ENCODE measurements at regions of chr1 and their contacts with region 1.

Region 1: GRCh38 chr1:177256153-177257075 is 85.7 kb downstream of the BRINP2 start:
- DNase-seq: peak; percentile 83
- ATAC-seq: peak; percentile 99
- H3K4me3 Mint-ChIP-seq: no peak overlapping the region
- H3K27ac Mint-ChIP-seq: no peak overlapping the region
- H3K4me1 Mint-ChIP-seq: peaks cover 7% of the 10 kb centered on the region
- H3K27me3 Mint-ChIP-seq: no peaks in the 10 kb centered on the region; the same call in 1 of the 2 replicates
- CTCF ChIP-seq: peak; percentile 60

Region 2: DNA sequence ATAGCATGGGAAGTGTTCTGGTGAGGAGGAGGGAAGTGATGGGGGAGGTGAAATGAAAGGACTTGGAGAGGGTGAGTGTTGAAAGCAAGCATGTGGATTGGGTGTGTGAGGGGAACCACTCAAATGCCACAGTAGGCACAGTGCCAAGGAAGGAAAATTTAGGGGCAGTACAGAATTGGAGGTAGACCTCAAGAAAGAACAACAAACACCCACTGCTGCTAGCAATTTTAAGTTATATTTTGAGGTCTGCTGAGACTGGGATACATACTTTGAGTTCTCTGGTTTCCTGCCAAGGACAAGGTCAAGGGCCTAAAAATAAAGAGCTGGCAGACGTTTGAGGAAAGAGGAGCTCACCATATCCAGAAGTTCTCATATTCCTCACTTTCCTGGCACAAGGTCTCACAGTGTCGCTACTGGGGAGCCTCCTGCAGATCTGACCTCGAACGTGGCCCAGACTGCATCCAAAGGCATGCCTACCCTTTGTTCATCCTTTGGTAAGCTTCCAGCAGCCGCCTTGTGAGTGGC is 18.3 kb after region 1 on chr1:
- CTCF ChIA-PET with region 1: interaction called, 22 read pairs
- POLR2A ChIA-PET with region 1: no interaction called
- DNase-seq: no peak
- ATAC-seq: no peak
- H3K4me3 Mint-ChIP-seq: no peak overlapping the region
- H3K27ac Mint-ChIP-seq: no peak overlapping the region
- H3K4me1 Mint-ChIP-seq: peaks cover 3% of the 10 kb centered on the region
- H3K27me3 Mint-ChIP-seq: peaks cover 15% of the 10 kb centered on the region
- CTCF ChIP-seq: no peak

Region 3: GRCh38 chr1:177340601-177341067 is 84.2 kb after region 1 on chr1:
- CTCF ChIA-PET with region 1: no interaction called
- POLR2A ChIA-PET with region 1: no interaction called
- DNase-seq: no peak
- ATAC-seq: no peak
- H3K4me3 Mint-ChIP-seq: no peak overlapping the region
- H3K27ac Mint-ChIP-seq: no peak overlapping the region
- H3K4me1 Mint-ChIP-seq: peaks cover 4% of the 10 kb centered on the region; the same call in 1 of the 2 replicates
- H3K27me3 Mint-ChIP-seq: no peaks in the 10 kb centered on the region
- CTCF ChIP-seq: no peak

Region 4: GRCh38 chr1:177355595-177355994 is 99.2 kb after region 1 on chr1:
- CTCF ChIA-PET with region 1: interaction called, 51 read pairs
- POLR2A ChIA-PET with region 1: no interaction called
- DNase-seq: peak; percentile 33
- ATAC-seq: peak; percentile 78
- H3K4me3 Mint-ChIP-seq: no peak overlapping the region
- H3K27ac Mint-ChIP-seq: no peak overlapping the region
- H3K4me1 Mint-ChIP-seq: peaks cover 2% of the 10 kb centered on the region
- H3K27me3 Mint-ChIP-seq: no peaks in the 10 kb centered on the region
- CTCF ChIP-seq: peak; percentile 39; the same call in 1 of the 2 replicates

Region 5: GRCh38 chr1:177913762-177914540 is 657.5 kb after region 1 on chr1:
- CTCF ChIA-PET with region 1: interaction called, 13 read pairs
- POLR2A ChIA-PET with region 1: no interaction called
- DNase-seq: peak; percentile 62
- ATAC-seq: peak; percentile 91
- H3K4me3 Mint-ChIP-seq: no peak overlapping the region
- H3K27ac Mint-ChIP-seq: no peak overlapping the region
- H3K4me1 Mint-ChIP-seq: no peaks in the 10 kb centered on the region; the same call in 1 of the 2 replicates
- H3K27me3 Mint-ChIP-seq: no peaks in the 10 kb centered on the region; the same call in 1 of the 2 replicates
- CTCF ChIP-seq: peak; percentile 23; the same call in 1 of the 2 replicates